Activated CD8-positive, alpha-beta T cell treated with anti-CD3 and anti-CD28 coated beads for 36 hours (primary cell): ENCODE measurements at regions of chr2 and their contacts with region 1.

Region 1: DNA sequence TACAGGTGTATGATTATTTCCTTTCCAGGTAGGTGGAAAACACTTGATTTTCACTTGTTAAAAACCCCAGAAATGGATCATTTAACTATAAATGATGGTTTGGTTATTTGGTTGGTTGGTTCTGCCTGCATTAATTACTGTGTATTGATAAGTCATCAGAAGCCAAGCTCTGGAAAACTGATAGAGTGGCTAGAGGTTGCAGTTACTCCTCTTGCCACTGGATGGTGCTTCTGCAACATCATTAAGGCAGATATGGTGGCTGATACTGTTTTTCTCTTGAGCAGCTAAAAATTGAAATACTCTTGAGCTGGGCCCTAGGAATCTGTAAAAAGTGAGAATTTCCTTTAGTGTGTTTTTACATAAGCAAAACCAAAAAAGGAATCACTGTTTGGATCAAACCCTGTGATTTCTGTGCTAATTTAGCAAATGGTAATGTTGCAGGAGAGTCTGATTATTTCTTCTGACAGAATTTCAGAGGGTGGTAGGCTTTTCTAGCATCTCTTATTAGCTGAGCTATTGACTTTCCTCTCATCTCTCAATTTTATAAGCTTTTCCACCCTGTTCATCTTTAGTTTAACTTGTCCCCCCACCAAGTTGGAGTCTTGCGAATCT is 54.3 kb downstream of the RAB10 start:
- DNase-seq: peak; percentile 44
- ATAC-seq: peak; percentile 66
- H3K4me3 Mint-ChIP-seq: no peak overlapping the region
- H3K27ac Mint-ChIP-seq: no peak overlapping the region
- H3K4me1 Mint-ChIP-seq: peaks cover 66% of the 10 kb centered on the region
- H3K27me3 Mint-ChIP-seq: no peaks in the 10 kb centered on the region
- CTCF ChIP-seq: peak; percentile 87

Region 2: DNA sequence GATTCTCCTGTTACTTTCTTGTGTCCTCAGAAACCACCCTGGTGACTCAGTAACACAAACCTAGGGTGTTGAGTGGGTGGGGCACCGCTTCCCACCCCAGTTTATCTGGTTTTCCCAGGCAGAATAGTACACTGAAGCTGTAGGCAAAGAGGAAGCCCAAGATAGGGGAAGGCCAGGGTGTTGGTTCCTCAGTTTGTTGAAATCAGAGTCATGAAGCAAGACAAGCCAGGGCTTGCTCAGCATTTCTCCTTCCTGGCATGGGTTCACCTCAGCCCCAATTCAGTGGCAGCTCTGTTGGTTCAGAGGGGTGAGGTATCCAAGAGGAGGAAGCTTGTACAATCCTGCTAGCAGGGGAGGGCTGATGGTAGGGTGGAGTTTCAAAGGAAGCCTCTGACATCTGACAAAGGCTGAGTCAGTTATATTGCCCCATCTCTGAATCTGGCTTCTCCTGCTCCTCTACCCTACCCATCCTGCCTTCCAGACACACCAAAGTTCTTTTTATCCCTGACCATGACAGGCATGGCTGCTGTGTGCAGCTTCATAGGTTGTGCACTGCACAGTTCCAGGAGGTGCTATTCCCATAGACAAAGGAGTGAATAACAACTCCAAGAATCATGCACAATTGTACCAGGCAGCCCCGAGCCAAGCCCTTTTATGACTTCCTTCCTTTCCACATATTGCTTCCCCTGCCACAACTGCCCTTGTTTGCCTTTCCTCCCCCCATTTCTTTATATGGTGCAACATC is 79.1 kb before region 1 on chr2:
- CTCF ChIA-PET with region 1: no interaction called
- POLR2A ChIA-PET with region 1: no interaction called
- intact Hi-C with region 1: no loop called
- DNase-seq: no peak
- ATAC-seq: no peak
- H3K4me3 Mint-ChIP-seq: no peak overlapping the region
- H3K27ac Mint-ChIP-seq: no peak overlapping the region
- H3K4me1 Mint-ChIP-seq: no peaks in the 10 kb centered on the region
- H3K27me3 Mint-ChIP-seq: no peaks in the 10 kb centered on the region
- CTCF ChIP-seq: no peak

Region 3: GRCh38 chr2:26075963-26076605 is 12.1 kb before region 1 on chr2:
- CTCF ChIA-PET with region 1: interaction called, 17 read pairs
- POLR2A ChIA-PET with region 1: no interaction called
- intact Hi-C with region 1: no loop called
- DNase-seq: no peak
- ATAC-seq: no peak
- H3K4me3 Mint-ChIP-seq: no peak overlapping the region
- H3K27ac Mint-ChIP-seq: no peak overlapping the region
- H3K4me1 Mint-ChIP-seq: peaks cover 39% of the 10 kb centered on the region
- H3K27me3 Mint-ChIP-seq: no peaks in the 10 kb centered on the region
- CTCF ChIP-seq: no peak

Region 4: DNA sequence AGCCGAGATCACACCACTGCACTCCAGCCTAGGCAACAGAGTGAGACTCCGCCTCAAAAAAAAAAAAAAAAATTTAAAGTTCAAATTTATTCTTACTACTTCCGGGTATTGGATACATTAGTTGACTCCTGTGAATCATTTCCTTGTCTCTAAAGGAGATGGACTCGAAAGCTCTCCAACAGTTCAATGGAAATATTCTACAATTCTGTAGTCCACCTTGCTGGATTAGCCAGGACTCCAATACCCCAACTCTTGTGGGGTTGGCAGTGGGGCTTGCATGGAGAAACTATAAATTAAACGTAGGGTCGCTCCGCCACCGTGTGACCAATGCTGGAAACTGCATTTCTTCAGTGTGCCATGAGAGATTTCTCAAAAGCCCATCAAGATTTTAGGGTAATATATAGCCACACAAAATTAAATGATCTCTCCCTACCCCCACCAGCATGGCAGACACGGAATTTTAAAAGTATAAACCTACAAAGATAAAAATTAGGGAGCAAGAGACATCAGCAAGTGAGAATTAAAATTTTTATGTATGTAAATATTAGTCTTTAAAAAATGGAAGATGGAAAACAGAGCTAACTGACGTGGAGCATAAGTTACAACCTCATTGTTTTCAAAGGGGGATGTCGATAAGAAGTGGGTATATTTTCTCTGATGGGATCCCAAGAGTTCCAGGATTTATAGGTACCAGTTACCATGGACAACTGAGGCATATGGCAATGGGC is 57.0 kb after region 1 on chr2:
- CTCF ChIA-PET with region 1: interaction called, 13 read pairs
- POLR2A ChIA-PET with region 1: no interaction called
- intact Hi-C with region 1: no loop called
- DNase-seq: peak; percentile 82
- ATAC-seq: peak; percentile 94
- H3K4me3 Mint-ChIP-seq: no peak overlapping the region
- H3K27ac Mint-ChIP-seq: no peak overlapping the region
- H3K4me1 Mint-ChIP-seq: peaks cover 1% of the 10 kb centered on the region
- H3K27me3 Mint-ChIP-seq: peaks cover 4% of the 10 kb centered on the region
- CTCF ChIP-seq: peak; percentile 84